Activated CD4-positive, alpha-beta memory T cell treated with anti-CD3 and anti-CD28 coated beads for 36 hours (primary cell): ENCODE measurements at regions of chr14 and their contacts with region 1.

Region 1: GRCh38 chr14:39266871-39267591 is 33.3 kb downstream of the MIA2 start:
- DNase-seq: peak; percentile 79
- H3K4me3 Mint-ChIP-seq: peak overlapping the region; percentile 84
- H3K27ac Mint-ChIP-seq: peak overlapping the region; percentile 90
- H3K4me1 Mint-ChIP-seq: peaks cover 46% of the 10 kb centered on the region
- H3K27me3 Mint-ChIP-seq: no peaks in the 10 kb centered on the region

Region 2: GRCh38 chr14:39169541-39169900 is 97.5 kb before region 1 on chr14:
- CTCF ChIA-PET with region 1: interaction called, 9 read pairs
- POLR2A ChIA-PET with region 1: interaction called, 15 read pairs
- intact Hi-C with region 1: loop called (anchors 1 kb)
- DNase-seq: no peak
- H3K4me3 Mint-ChIP-seq: peak overlapping the region; percentile 85
- H3K27ac Mint-ChIP-seq: peak overlapping the region; percentile 96
- H3K4me1 Mint-ChIP-seq: peaks cover 37% of the 10 kb centered on the region
- H3K27me3 Mint-ChIP-seq: no peaks in the 10 kb centered on the region

Region 3: DNA sequence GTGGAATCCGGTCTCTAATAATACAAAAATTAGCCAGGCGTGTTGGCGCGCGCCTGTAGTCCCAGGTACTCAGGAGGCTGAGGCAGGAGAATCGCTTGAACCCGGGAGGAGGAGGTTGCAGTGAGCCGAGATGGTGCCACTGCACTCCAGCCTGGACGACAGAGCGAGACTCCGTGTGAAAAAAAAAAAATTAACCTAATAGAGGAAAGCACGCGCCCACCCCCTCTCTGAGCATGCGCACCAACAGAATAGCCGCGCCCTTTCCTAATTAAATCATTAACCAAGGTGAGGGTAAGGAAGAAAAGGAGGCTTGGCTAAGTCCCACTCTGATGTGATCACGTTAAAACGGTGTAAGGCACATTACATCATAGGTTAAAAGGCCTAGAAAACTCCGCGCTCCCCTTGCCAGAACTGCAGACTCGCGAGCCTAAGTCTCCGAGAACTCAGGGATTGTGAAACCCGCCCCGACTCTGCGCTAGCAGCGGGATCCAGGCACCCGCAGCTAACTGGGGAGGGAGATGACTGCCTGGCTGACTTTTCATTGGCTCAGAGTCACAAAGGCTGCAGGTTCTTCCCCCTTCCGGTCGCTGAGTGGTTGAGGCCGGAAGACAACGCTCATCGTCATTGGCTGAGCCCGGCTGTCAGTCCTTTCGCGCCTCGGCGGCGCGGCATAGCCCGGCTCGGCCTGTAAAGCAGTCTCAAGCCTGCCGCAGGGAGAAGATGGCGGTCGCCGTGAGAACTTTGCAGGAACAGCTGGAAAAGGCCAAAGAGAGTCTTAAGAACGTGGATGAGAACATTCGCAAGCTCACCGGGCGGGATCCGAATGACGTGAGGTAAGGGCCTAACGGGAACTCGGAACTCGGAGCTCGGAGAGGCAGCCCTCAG is 92.2 kb before region 1 on chr14 and contains the start of gene PNN:
- CTCF ChIA-PET with region 1: interaction called, 9 read pairs
- POLR2A ChIA-PET with region 1: interaction called, 15 read pairs
- intact Hi-C with region 1: loop called (anchors 1 kb)
- DNase-seq: peak; percentile 98
- H3K4me3 Mint-ChIP-seq: peak within 1 kb of the TSS; percentile 89
- H3K27ac Mint-ChIP-seq: peak within 1 kb of the TSS; percentile 95
- H3K4me1 Mint-ChIP-seq: peaks cover 32% of the 10 kb centered on the region
- H3K27me3 Mint-ChIP-seq: no peaks in the 10 kb centered on the region
- total RNA-seq, gene PNN: 85.3 to 88.8 TPM

Region 4: GRCh38 chr14:39339003-39339402 is 72.0 kb after region 1 on chr14:
- CTCF ChIA-PET with region 1: no interaction called
- POLR2A ChIA-PET with region 1: no interaction called
- intact Hi-C with region 1: no loop called
- DNase-seq: no peak
- H3K4me3 Mint-ChIP-seq: no peak overlapping the region
- H3K27ac Mint-ChIP-seq: no peak overlapping the region
- H3K4me1 Mint-ChIP-seq: peaks cover 12% of the 10 kb centered on the region
- H3K27me3 Mint-ChIP-seq: no peaks in the 10 kb centered on the region

Region 5: GRCh38 chr14:39459795-39460478 is 192.9 kb after region 1 on chr14:
- CTCF ChIA-PET with region 1: no interaction called
- POLR2A ChIA-PET with region 1: no interaction called
- intact Hi-C with region 1: no loop called
- DNase-seq: no peak
- H3K4me3 Mint-ChIP-seq: no peak overlapping the region
- H3K27ac Mint-ChIP-seq: no peak overlapping the region
- H3K4me1 Mint-ChIP-seq: peaks cover 3% of the 10 kb centered on the region
- H3K27me3 Mint-ChIP-seq: no peaks in the 10 kb centered on the region